ENCODE measurements at regions of chr12 and their contacts with region 1.

Region 1: GRCh38 chr12:48890657-48891418 is 25.2 kb upstream of the RND1 start:
- DNase-seq: no peak
- H3K4me3 ChIP-seq: peak overlapping the region; percentile 24
- H3K27me3 ChIP-seq: peaks cover 5% of the 10 kb centered on the region; the same call in 1 of the 2 replicates
- CTCF ChIP-seq: peak; percentile 97

Region 2: GRCh38 chr12:48592591-48593088 is 298.2 kb before region 1 on chr12:
- CTCF ChIA-PET with region 1: no interaction called
- POLR2A ChIA-PET with region 1: no interaction called
- DNase-seq: no peak
- H3K4me3 ChIP-seq: no peak overlapping the region
- H3K27me3 ChIP-seq: no peaks in the 10 kb centered on the region; the same call in 1 of the 2 replicates
- CTCF ChIP-seq: no peak

Region 3: DNA sequence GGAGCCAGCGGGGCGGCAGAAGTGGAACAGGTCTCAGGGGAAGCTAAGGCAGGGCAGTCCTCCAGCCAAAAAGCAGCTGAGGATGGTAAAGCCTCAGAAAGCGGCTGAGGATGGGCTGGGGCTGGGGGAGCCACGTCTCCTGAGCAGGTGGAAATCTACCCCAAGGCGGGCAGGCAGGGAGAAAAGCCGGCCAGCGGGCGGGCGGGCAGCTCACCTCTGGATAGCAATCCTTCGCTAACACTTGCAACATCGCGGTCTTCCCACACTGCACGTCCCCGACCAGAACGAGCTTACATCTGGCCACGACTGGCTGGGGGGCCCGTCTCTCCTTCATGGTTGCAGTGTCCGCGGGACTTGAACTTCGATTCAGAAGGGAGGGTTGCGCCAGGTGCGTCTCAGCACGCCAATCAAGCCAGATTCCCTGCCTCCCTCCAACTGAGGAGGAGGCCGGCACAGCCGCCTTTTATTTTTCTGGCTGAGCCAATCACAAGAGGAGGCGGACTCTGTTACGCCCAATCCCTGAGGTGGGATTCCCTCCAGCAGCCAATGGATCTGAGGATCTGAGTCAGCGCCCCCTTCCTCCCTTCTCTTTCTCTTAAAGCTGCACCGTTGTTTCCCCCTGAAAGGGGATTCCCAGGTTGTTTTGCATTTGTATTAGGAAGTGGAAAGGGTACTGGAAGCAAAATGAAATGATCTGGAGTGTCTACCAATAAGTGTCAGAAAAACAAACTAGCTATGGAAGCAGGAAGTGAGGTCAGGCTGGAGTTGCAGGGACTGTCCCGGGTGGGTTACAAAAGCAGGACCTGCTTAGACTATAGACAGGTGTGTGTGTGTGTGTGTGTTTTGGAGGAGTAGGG is 25.2 kb before region 1 on chr12 and contains the start of gene RND1:
- CTCF ChIA-PET with region 1: interaction called, 243 read pairs
- POLR2A ChIA-PET with region 1: no interaction called
- DNase-seq: peak; percentile 52
- H3K4me3 ChIP-seq: peak within 1 kb of the TSS; percentile 43
- H3K27me3 ChIP-seq: peaks cover 22% of the 10 kb centered on the region
- CTCF ChIP-seq: 0 out of 2 replicates have a peak, but pooled peaks have one; percentile 15
- polyA plus RNA-seq, gene RND1: 0.31 and 0.72 TPM in 2 replicates

Region 4: DNA sequence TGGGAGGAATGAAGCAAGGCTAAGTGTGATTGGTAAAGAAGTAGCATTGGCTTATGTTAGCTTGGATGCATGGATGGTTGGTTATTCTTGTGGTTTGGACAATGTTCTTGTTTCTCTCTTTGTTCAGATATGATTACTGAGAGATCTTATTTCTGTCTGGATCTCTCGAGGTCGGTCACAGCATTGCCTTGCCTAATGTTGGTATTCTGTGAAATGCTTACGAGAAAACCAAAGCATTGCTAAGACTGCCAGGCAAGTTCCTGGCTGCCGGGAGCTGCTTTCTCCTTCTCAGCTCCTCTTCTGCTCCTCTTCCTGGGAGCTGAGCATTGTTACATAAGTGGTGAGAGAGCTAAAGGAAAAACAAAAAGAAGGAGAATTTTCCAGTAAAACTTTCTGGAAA is 17.7 kb before region 1 on chr12:
- CTCF ChIA-PET with region 1: interaction called, 14 read pairs
- POLR2A ChIA-PET with region 1: no interaction called
- DNase-seq: no peak
- H3K4me3 ChIP-seq: no peak overlapping the region
- H3K27me3 ChIP-seq: peaks cover 3% of the 10 kb centered on the region; the same call in 1 of the 2 replicates
- CTCF ChIP-seq: no peak

Region 5: GRCh38 chr12:48901278-48901677 is 10.4 kb after region 1 on chr12:
- CTCF ChIA-PET with region 1: interaction called, 32 read pairs
- POLR2A ChIA-PET with region 1: interaction called, 8 read pairs
- DNase-seq: no peak
- H3K4me3 ChIP-seq: no peak overlapping the region
- H3K27me3 ChIP-seq: no peaks in the 10 kb centered on the region; the same call in 1 of the 2 replicates
- CTCF ChIP-seq: no peak

Region 6: DNA sequence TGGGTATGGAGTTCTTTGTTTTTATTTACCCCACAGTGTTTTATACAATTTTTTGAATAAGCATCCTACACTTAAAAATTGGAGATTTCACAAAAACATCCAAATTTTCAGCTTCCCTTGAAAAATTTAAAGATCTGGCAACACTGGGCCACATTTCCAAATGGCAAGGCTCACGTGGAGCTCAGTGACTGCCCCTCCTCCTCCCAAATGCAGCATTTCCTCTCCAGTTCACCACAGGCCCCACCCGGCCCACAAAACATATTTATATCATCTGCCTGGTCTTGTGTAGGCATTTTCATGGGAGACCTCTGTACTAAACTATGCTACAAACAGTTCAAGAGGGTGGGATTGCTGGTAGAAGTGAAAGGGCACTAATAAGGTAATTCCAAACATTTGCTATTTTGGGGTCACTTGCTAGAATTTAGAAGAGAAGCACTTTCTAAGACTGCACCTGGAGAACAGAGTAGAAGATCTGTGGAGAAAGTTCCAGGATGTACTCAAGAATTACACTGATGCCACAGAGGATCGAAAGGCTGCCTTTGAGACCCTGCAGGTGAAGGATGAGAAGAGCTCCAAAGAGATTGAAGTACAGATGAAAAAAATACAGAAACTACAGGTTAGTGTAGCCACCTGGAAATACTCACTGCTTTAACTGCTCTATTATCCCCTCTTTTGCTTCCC is 27.2 kb after region 1 on chr12:
- CTCF ChIA-PET with region 1: interaction called, 18 read pairs
- POLR2A ChIA-PET with region 1: no interaction called
- DNase-seq: no peak
- H3K4me3 ChIP-seq: no peak overlapping the region
- H3K27me3 ChIP-seq: no peaks in the 10 kb centered on the region
- CTCF ChIP-seq: no peak

Region 7: GRCh38 chr12:48946205-48946604 is 55.4 kb after region 1 on chr12:
- CTCF ChIA-PET with region 1: no interaction called
- POLR2A ChIA-PET with region 1: no interaction called
- DNase-seq: no peak
- H3K4me3 ChIP-seq: no peak overlapping the region
- H3K27me3 ChIP-seq: no peaks in the 10 kb centered on the region
- CTCF ChIP-seq: no peak

Region 8: GRCh38 chr12:49088190-49088931 is 197.5 kb after region 1 on chr12:
- CTCF ChIA-PET with region 1: no interaction called
- POLR2A ChIA-PET with region 1: no interaction called
- DNase-seq: peak; percentile 39
- H3K4me3 ChIP-seq: no peak overlapping the region
- H3K27me3 ChIP-seq: peaks cover 9% of the 10 kb centered on the region
- CTCF ChIP-seq: peak; percentile 93

Measured in BJ (cell line).